Heart right ventricle (tissue), 16 donors: ENCODE measurements at regions of chr10 and their contacts with region 1.

Region 1: DNA sequence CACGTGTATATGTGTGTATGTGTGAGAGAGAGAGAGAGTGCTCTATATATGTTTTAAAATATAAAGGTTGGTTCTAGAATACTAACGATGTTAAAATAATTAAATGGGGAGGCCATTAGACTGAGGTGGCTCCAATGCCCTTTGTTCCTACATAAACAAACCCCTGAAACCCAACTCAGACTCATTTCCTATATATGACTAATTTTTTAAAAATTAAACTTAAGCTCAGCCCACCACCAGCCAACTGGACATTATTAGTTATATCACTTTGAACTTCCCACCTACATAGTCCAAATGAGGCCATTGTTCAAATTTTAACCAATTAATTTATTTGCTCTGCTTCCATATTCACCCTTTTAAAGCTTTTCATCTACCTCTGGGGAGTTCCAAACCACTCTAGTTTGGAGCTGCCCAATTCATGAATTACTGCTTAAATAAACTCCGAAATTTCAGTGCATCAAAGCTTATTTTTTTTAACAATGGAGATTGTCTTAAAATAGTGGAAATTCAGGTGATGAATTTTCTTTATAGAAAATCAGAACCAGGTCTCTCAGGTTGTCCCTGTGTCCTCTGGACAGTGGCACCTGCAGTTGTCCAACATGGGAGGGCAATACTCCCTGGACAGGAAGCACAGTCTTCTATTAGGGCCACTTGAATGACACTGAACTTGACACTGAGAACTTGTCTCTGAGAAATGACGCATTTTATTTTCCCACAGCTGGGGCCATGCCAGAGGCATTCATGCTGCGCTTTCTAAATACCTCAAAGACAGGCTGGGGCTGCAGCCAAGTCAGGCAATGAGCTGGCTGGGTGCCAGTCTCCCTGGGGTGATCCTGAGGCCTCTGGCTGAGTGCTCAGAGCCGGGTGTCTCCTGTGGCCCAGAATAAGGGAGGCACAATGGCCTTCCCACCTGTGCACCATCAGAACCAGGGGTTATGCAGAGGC is 109.5 kb upstream of the TMEM72 start:
- DNase-seq: peak; percentile 91
- ATAC-seq: peak; percentile 78 to 97 (median 92)
- H3K4me3 ChIP-seq: no peak overlapping the region
- H3K27ac ChIP-seq: peak overlapping the region in 7 of 10 donors; percentile 8 to 51 (median 37)
- H3K4me1 ChIP-seq: peaks cover 0 to 48% (median 29%) of the 10 kb centered on the region in 9 donors
- H3K27me3 ChIP-seq: no peaks in the 10 kb centered on the region
- CTCF ChIP-seq: no peak

Region 2: GRCh38 chr10:44725404-44725803 is 76.3 kb before region 1 on chr10:
- intact Hi-C with region 1: loop called in 1 of 10 experiments (anchors 5 kb)
- DNase-seq: no peak
- ATAC-seq: peak in 7 of 8 donors; percentile 71 to 92 (median 82)
- H3K4me3 ChIP-seq: no peak overlapping the region
- H3K27ac ChIP-seq: peak overlapping the region in 1 of 10 donors; percentile 37
- H3K4me1 ChIP-seq: peaks cover 0 to 31% (median 16%) of the 10 kb centered on the region in 9 donors
- H3K27me3 ChIP-seq: no peaks in the 10 kb centered on the region
- CTCF ChIP-seq: no peak

Region 3: DNA sequence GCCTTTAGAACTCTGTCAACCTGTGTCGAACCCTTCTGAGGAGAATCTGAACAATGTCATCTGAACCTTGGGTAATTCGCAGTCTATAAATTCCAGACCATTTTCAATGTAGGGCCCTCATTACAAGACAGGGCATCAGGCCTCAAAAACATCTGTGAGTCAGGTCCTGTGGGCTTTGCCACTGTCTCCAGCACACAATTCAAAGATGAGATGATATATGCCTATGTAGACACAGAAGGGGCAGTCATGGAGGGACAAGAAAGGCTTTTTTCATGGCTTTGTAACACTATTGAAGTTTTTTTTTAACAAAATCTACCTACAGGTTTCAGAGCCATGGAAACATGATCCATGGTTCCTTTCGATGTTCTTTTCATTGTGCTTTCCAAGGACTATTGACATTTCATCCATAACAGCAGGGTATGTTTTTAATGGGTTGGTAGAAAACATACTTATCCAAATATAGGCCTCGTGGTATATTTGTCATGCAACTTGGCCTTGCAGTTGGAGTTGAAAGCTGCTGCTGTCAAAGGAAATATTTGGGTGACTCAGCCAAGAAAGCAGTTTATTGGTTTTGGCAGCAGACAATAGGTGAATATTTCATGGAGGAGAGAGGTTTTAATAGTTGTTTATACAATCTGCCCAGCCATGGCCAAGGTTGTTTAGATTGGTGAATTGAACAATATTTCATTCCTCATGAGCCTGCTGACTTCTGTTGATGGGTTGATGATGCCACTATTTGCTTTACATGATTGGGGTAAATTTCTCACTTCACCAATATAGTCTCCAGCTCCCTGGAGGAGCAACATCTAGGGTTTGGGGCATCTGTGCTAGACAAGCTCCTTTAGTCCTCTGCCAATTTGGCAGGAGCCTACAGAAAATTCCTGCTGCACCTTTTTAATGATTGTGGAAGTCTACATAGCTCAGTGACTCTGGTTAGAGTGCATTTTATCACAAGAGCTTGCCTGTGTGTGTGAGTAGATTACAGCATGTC is 48.9 kb before region 1 on chr10:
- intact Hi-C with region 1: no loop called
- DNase-seq: no peak
- ATAC-seq: no peak
- H3K4me3 ChIP-seq: no peak overlapping the region
- H3K27ac ChIP-seq: no peak overlapping the region
- H3K4me1 ChIP-seq: no peaks in the 10 kb centered on the region
- H3K27me3 ChIP-seq: peaks cover 0 to 3% (median 0%) of the 10 kb centered on the region in 7 donors
- CTCF ChIP-seq: no peak